Ascending aorta (tissue), 2 donors: ENCODE measurements at regions of chr7 and their contacts with region 1.

Region 1: GRCh38 chr7:43925984-43926797 is at the start of gene UBE2D4:
- DNase-seq: peak; percentile 56 to 92
- H3K4me3 ChIP-seq: peak within 1 kb of the TSS; percentile 82 to 86
- H3K27ac ChIP-seq: peak within 1 kb of the TSS; percentile 96
- H3K4me1 ChIP-seq: peaks cover 0 to 7% of the 10 kb centered on the region in 2 donors
- H3K27me3 ChIP-seq: no peaks in the 10 kb centered on the region
- CTCF ChIP-seq: no peak
- total RNA-seq, gene UBE2D4: 13.1 TPM

Region 2: DNA sequence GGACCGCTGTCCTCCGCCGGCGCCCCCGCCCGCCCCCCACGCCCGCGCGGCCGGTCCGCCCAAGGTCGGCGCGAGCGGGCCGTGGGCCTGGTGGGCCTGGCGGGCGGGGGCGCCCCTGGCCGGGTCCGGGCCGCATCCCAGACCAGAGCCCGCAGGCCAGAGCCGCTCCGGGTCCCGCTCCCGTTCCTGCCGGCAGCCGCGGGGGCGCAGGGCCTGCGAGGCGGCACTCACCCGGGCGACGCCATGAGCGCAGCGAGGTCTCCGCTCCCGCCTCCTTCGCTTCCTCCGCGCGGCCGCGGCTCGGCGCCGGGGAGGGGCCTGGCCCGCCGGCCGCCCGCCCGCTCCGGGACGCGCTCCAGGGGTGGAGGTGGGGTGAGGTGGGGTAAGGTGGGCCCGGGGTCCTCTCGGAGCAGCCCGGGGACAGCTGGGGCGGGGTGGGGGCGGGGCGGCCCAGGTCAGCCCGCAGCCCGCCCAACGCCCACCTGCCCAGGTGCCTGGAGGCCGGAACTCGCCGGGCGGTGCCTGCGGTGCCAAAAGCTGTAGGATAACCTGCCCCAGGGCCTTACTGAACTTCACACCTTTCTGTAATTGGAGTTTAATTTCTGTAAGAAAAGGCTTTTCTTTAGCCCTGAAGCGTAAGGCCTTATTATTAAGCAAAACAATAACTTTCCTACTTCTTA is 19.7 kb before region 1 on chr7 and contains the start of gene URGCP:
- intact Hi-C with region 1: loop called (anchors 1 kb)
- DNase-seq: peak in 1 of 2 donors; percentile 67
- H3K4me3 ChIP-seq: peak within 1 kb of the TSS; percentile 74 to 81
- H3K27ac ChIP-seq: peak within 1 kb of the TSS; percentile 90 to 96
- H3K4me1 ChIP-seq: peaks cover 0 to 20% of the 10 kb centered on the region in 2 donors
- H3K27me3 ChIP-seq: no peaks in the 10 kb centered on the region
- CTCF ChIP-seq: no peak
- total RNA-seq, gene URGCP: 29.2 TPM